OCI-LY7 (cell line): ENCODE measurements at regions of chr16 and their contacts with region 1.

Region 1: DNA sequence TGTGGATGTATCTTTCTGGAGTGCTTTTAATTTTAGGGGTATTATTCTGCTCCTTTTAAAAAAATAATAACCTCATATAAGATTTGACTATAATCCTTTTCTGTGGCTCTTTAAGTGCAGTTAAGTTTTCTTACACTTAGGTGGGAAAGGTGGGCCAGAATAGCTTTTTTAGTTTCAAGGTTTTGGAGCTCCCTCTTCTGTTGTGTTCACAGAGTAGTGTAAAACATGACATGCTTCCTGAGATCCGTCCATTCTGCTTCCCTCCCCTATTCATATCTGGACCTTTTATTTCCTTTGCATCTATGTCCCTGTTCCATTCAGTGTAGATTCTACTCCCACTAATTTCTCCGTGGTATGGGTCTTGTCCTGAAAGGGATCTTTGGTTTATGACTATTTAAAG is 12.8 kb downstream of the LRRC36 start:
- DNase-seq: peak; percentile 16
- H3K4me3 ChIP-seq: no peak overlapping the region
- H3K27ac ChIP-seq: no peak overlapping the region
- H3K4me1 ChIP-seq: no peaks in the 10 kb centered on the region
- CTCF ChIP-seq: peak; percentile 70

Region 2: GRCh38 chr16:67260426-67261075 is 78.9 kb before region 1 on chr16:
- CTCF ChIA-PET with region 1: interaction called, 10 read pairs
- POLR2A ChIA-PET with region 1: interaction called, 4 read pairs
- intact Hi-C with region 1: loop called (anchors 2 kb)
- DNase-seq: peak; percentile 77
- H3K4me3 ChIP-seq: no peak overlapping the region
- H3K27ac ChIP-seq: no peak overlapping the region
- H3K4me1 ChIP-seq: peaks cover 5% of the 10 kb centered on the region
- CTCF ChIP-seq: peak; percentile 84

Region 3: DNA sequence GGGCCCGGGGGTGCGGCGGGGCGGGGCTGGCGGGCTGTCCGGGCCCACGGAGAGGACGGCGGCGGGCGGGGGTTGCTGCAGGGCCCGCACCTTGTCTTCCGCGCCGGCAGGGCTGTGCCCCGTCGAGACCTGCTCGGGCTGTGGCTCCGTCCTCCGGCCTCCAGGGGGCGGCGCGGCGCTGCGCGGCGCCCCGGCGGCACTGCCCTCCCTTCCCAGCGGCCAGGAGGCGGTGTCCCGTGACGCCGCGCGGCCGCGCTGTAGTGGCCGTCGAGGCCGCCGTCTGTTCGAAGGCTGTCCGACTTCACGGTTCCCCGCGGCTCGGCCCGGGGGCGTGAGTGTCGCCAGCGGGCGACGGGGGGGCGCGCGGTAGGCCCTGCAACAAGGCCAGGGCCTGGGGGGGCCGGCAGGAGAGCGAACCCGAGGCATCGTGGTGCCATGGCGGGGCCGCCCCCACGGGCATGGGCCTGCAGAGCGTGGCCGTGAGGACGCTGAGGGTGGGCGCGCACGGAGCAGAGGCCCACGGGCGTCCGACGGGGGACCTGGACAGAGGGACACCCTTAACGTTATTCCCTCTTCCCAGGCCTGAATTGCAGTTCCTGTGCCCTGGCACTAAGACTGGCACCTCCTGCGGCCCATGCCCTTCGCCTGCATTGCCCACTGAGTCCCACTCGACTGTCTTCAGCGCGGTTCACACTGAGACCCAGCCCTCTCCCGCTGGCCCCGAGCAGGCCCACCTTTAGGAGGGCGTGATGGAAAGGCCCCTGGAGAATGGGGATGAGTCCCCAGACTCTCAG is 60.0 kb before region 1 on chr16 and contains the start of gene PLEKHG4:
- CTCF ChIA-PET with region 1: no interaction called
- POLR2A ChIA-PET with region 1: no interaction called
- intact Hi-C with region 1: loop called (anchors 1 kb)
- DNase-seq: peak; percentile 46
- H3K4me3 ChIP-seq: peak within 1 kb of the TSS; percentile 53
- H3K27ac ChIP-seq: no peak within 1 kb of the TSS
- H3K4me1 ChIP-seq: no peaks in the 10 kb centered on the region
- CTCF ChIP-seq: peak; percentile 65
- total RNA-seq, gene PLEKHG4: not detected in 2 replicates

Region 4: DNA sequence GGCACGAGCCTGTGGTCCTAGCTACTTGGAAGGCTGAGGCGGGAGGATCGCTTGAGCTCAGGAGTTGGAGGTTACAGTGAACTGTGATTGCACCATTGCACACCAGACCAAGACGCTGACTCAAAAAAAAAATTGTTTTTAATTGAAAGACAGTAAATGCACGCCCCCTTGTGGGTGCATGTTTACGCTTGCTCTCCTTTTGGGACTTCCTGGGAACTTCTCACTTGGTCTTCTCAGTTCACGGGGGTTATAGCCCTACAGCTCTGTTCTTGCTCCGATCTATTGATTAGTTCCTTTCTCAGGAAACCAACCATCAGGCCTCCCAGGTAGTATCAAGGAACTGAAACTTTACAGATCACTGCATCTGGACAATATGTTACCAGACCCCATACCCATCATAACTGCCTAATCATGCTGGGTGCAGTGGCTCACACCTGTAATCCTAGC is 175.0 kb after region 1 on chr16:
- CTCF ChIA-PET with region 1: no interaction called
- POLR2A ChIA-PET with region 1: no interaction called
- intact Hi-C with region 1: no loop called
- DNase-seq: peak; percentile 95
- H3K4me3 ChIP-seq: peak overlapping the region; percentile 12
- H3K27ac ChIP-seq: peak overlapping the region; percentile 91
- H3K4me1 ChIP-seq: peaks cover 63% of the 10 kb centered on the region
- CTCF ChIP-seq: peak; percentile 82